ENCODE measurements at regions of chr20 and their contacts with region 1.

Region 1: GRCh38 chr20:14337400-14338171 is at the start of gene FLRT3:
- DNase-seq: peak; percentile 94 to 97
- H3K4me3 ChIP-seq: peak within 1 kb of the TSS; percentile 54
- H3K4me3 Mint-ChIP-seq: peak within 1 kb of the TSS; percentile 77
- H3K27ac Mint-ChIP-seq: peak within 1 kb of the TSS; percentile 48
- H3K4me1 ChIP-seq: peaks cover 40% of the 10 kb centered on the region
- H3K4me1 Mint-ChIP-seq: peaks cover 27% of the 10 kb centered on the region
- H3K27me3 ChIP-seq: no peaks in the 10 kb centered on the region
- H3K27me3 Mint-ChIP-seq: no peaks in the 10 kb centered on the region
- CTCF ChIP-seq: peak; percentile 81 to 82
- total RNA-seq, gene FLRT3: 98.2 and 107 TPM in 2 replicates

Region 2: GRCh38 chr20:14189794-14190402 is 147.7 kb before region 1 on chr20:
- CTCF ChIA-PET with region 1: interaction called, 3 read pairs
- POLR2A ChIA-PET with region 1: no interaction called
- intact Hi-C with region 1: loop called (anchors 5 kb)
- DNase-seq: peak in 1 of 2 experiments; percentile 49
- H3K4me3 ChIP-seq: no peak overlapping the region
- H3K4me3 Mint-ChIP-seq: no peak overlapping the region
- H3K27ac Mint-ChIP-seq: no peak overlapping the region
- H3K4me1 ChIP-seq: peaks cover 4% of the 10 kb centered on the region; the same call in 1 of the 2 replicates
- H3K4me1 Mint-ChIP-seq: peaks cover 16% of the 10 kb centered on the region
- H3K27me3 ChIP-seq: no peaks in the 10 kb centered on the region
- H3K27me3 Mint-ChIP-seq: no peaks in the 10 kb centered on the region
- CTCF ChIP-seq: peak; percentile 27 to 50

Region 3: DNA sequence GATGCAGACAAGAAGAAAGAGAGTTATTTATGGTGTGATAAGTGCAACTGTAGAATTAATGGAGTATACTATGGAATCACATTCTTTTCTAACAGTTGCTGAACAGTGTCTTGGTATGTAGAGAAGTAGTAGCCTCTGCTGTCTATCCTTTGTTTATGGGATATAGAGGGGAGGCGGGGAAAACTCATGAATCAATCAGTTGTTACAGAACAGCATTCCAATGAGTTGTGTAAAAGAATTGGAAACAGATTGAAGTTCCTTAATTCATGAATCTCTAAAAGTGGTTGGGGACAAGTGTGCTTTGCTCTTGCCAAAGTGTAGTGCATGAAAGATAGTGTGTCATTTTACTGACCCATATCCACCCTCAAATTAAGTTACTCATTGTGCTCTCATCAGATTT is 77.9 kb before region 1 on chr20:
- CTCF ChIA-PET with region 1: no interaction called
- POLR2A ChIA-PET with region 1: no interaction called
- intact Hi-C with region 1: no loop called
- DNase-seq: no peak
- H3K4me3 ChIP-seq: no peak overlapping the region
- H3K4me3 Mint-ChIP-seq: no peak overlapping the region
- H3K27ac Mint-ChIP-seq: no peak overlapping the region
- H3K4me1 ChIP-seq: peaks cover 3% of the 10 kb centered on the region; the same call in 1 of the 2 replicates
- H3K4me1 Mint-ChIP-seq: peaks cover 8% of the 10 kb centered on the region
- H3K27me3 ChIP-seq: no peaks in the 10 kb centered on the region
- H3K27me3 Mint-ChIP-seq: no peaks in the 10 kb centered on the region
- CTCF ChIP-seq: no peak

Region 4: GRCh38 chr20:14555676-14556075 is 218.1 kb after region 1 on chr20:
- CTCF ChIA-PET with region 1: interaction called, 5 read pairs
- POLR2A ChIA-PET with region 1: interaction called, 11 read pairs
- intact Hi-C with region 1: loop called (anchors 1 kb)
- DNase-seq: no peak
- H3K4me3 ChIP-seq: no peak overlapping the region
- H3K4me3 Mint-ChIP-seq: no peak overlapping the region
- H3K27ac Mint-ChIP-seq: peak overlapping the region; percentile 30
- H3K4me1 ChIP-seq: peaks cover 39% of the 10 kb centered on the region
- H3K4me1 Mint-ChIP-seq: peaks cover 19% of the 10 kb centered on the region
- H3K27me3 ChIP-seq: no peaks in the 10 kb centered on the region
- H3K27me3 Mint-ChIP-seq: no peaks in the 10 kb centered on the region
- CTCF ChIP-seq: no peak

Region 5: GRCh38 chr20:14712302-14712739 is 374.7 kb after region 1 on chr20:
- CTCF ChIA-PET with region 1: interaction called, 4 read pairs
- POLR2A ChIA-PET with region 1: interaction called, 8 read pairs
- intact Hi-C with region 1: loop called (anchors 1 kb)
- DNase-seq: peak; percentile 57 to 65
- H3K4me3 ChIP-seq: no peak overlapping the region
- H3K4me3 Mint-ChIP-seq: no peak overlapping the region
- H3K27ac Mint-ChIP-seq: peak overlapping the region; percentile 45
- H3K4me1 ChIP-seq: peaks cover 57% of the 10 kb centered on the region
- H3K4me1 Mint-ChIP-seq: peaks cover 45% of the 10 kb centered on the region
- H3K27me3 ChIP-seq: no peaks in the 10 kb centered on the region
- H3K27me3 Mint-ChIP-seq: no peaks in the 10 kb centered on the region
- CTCF ChIP-seq: no peak

Region 6: GRCh38 chr20:14948423-14948822 is 610.8 kb after region 1 on chr20:
- CTCF ChIA-PET with region 1: no interaction called
- POLR2A ChIA-PET with region 1: no interaction called
- intact Hi-C with region 1: loop called (anchors 10 kb)
- DNase-seq: peak in 1 of 2 experiments; percentile 11
- H3K4me3 ChIP-seq: no peak overlapping the region
- H3K4me3 Mint-ChIP-seq: no peak overlapping the region
- H3K27ac Mint-ChIP-seq: no peak overlapping the region
- H3K4me1 ChIP-seq: no peaks in the 10 kb centered on the region
- H3K4me1 Mint-ChIP-seq: no peaks in the 10 kb centered on the region
- H3K27me3 ChIP-seq: no peaks in the 10 kb centered on the region
- H3K27me3 Mint-ChIP-seq: no peaks in the 10 kb centered on the region
- CTCF ChIP-seq: peak in 1 of 2 experiments; percentile 3

Region 7: DNA sequence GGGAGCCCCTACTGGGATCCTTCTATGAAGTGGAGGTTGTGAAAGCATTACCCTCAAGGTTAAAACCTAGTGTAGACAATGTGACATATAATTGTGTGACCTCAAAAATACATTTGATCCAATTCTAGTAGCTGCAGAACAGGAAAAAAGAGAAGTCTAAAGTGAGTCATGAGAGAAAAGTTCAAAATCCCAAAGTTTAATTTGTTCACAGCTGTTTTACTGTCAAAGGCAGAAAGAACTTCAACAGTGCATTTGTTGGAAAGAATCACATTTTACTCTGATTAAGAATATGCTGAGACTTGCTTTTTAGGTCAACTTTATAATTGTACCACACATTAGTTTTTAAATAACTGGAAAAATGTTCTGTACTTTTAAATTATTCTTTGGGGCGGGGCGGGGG is 1027.2 kb after region 1 on chr20:
- CTCF ChIA-PET with region 1: no interaction called
- POLR2A ChIA-PET with region 1: no interaction called
- intact Hi-C with region 1: loop called (anchors 10 kb)
- DNase-seq: no peak
- H3K4me3 ChIP-seq: no peak overlapping the region
- H3K4me3 Mint-ChIP-seq: no peak overlapping the region
- H3K27ac Mint-ChIP-seq: no peak overlapping the region
- H3K4me1 ChIP-seq: no peaks in the 10 kb centered on the region
- H3K4me1 Mint-ChIP-seq: peaks cover 13% of the 10 kb centered on the region
- H3K27me3 ChIP-seq: no peaks in the 10 kb centered on the region
- H3K27me3 Mint-ChIP-seq: no peaks in the 10 kb centered on the region
- CTCF ChIP-seq: no peak

Measured in Caco-2 (cell line).